K562 (cell line): ENCODE measurements at regions of chr16 and their contacts with region 1.

Region 1: GRCh38 chr16:75566040-75566810 is at the start of gene GABARAPL2:
- DNase-seq: peak; percentile 87 to 92 (median 90)
- ATAC-seq: peak; percentile 89
- H3K4me3 ChIP-seq: peak within 1 kb of the TSS; percentile 95
- H3K27ac ChIP-seq: peak within 1 kb of the TSS; percentile 74
- H3K4me1 ChIP-seq: peaks cover 15 to 28% of the 10 kb centered on the region in 2 experiments; a peak in 4 of 5 replicates
- H3K27me3 ChIP-seq: no peaks in the 10 kb centered on the region
- CTCF ChIP-seq: no peak
- EP300 ChIP-seq: no peak
- POLR2A ChIP-seq: peak; percentile 68
- RAD21 ChIP-seq: no peak
- polyA plus RNA-seq, gene GABARAPL2: 252 to 288 TPM

Region 2: GRCh38 chr16:75576384-75576811 is 10.2 kb after region 1 on chr16:
- CTCF ChIA-PET with region 1: interaction called, 3 read pairs
- POLR2A ChIA-PET with region 1: interaction called, 11 read pairs
- in situ Hi-C with region 1: no loop called
- intact Hi-C with region 1: no loop called
- DNase-seq: no peak
- ATAC-seq: peak; percentile 23; the same call in 2 of the 3 replicates
- H3K4me3 ChIP-seq: no peak overlapping the region
- H3K27ac ChIP-seq: no peak overlapping the region
- H3K4me1 ChIP-seq: peaks cover 15 to 20% of the 10 kb centered on the region in 2 experiments; a peak in 3 of 5 replicates
- H3K27me3 ChIP-seq: no peaks in the 10 kb centered on the region
- CTCF ChIP-seq: no peak
- EP300 ChIP-seq: no peak
- POLR2A ChIP-seq: no peak
- RAD21 ChIP-seq: no peak

Region 3: DNA sequence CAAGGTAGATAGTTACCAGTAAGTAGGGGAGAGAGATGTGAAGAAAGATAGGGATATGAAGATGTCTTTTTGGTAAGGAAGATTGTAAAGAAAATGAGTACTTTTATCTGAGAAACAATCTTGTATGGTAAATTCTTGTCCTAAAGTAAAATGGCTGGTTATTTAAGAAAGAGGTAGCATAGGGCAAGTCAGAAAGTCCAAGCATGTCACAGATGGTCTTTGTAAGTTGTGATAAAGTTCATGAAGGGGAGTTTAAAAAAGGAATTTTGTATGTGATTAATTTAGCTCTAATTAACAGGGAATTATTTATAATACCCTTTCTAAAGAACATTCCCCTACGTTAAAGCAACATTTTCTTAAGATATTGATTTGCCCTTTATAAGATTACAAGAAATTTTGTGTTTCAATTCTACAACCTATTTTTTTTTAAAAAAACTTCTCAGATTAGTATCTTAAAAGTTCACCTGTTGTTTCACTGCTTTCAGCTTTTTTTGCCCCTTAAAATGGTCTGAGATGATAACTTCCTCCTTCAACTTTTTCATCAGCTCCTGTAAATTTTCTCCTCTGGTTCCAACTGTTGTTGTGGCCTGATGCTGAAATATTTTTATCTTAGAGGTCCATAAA is 176.3 kb after region 1 on chr16:
- CTCF ChIA-PET with region 1: no interaction called
- POLR2A ChIA-PET with region 1: no interaction called
- in situ Hi-C with region 1: no loop called
- intact Hi-C with region 1: no loop called
- DNase-seq: no peak
- ATAC-seq: no peak
- H3K4me3 ChIP-seq: no peak overlapping the region
- H3K27ac ChIP-seq: no peak overlapping the region
- H3K4me1 ChIP-seq: no peaks in the 10 kb centered on the region
- H3K27me3 ChIP-seq: no peaks in the 10 kb centered on the region
- CTCF ChIP-seq: no peak
- EP300 ChIP-seq: no peak
- POLR2A ChIP-seq: no peak
- RAD21 ChIP-seq: no peak